ENCODE measurements at regions of chr10 and their contacts with region 1.

Region 1: DNA sequence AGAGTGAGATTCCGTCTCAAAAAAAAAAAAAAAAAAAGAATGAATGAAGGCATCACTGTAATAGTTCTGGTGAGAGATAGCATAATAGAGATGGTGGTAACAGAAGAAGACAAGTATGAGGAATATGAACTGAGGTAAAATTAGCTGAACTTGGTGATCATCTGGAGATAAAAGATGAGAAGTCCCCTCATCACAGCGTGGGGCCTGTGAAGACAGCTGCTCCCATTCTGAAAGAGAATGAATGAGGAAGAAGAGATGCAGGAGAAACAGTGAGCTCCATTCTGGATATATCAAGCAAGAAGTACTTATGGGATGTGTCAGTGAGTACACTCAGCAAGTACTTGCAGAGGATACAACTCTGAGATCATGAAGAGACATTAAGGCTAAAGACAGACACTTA is 28.7 kb downstream of the ARMH3 start:
- DNase-seq: no peak
- ATAC-seq: no peak
- H3K4me3 ChIP-seq: no peak overlapping the region
- H3K27ac ChIP-seq: no peak overlapping the region
- H3K4me1 ChIP-seq: no peaks in the 10 kb centered on the region
- H3K27me3 ChIP-seq: no peaks in the 10 kb centered on the region
- CTCF ChIP-seq: no peak
- POLR2A ChIP-seq: no peak
- RAD21 ChIP-seq: no peak

Region 2: GRCh38 chr10:101897633-101898032 is 129.6 kb before region 1 on chr10:
- CTCF ChIA-PET with region 1: no interaction called
- POLR2A ChIA-PET with region 1: no interaction called
- dilution Hi-C with region 1: no loop called
- in situ Hi-C with region 1: no loop called
- intact Hi-C with region 1: no loop called
- DNase-seq: peak; percentile 75
- ATAC-seq: peak; percentile 96
- H3K4me3 ChIP-seq: no peak overlapping the region
- H3K27ac ChIP-seq: no peak overlapping the region
- H3K4me1 ChIP-seq: peaks cover 9% of the 10 kb centered on the region
- H3K27me3 ChIP-seq: no peaks in the 10 kb centered on the region
- CTCF ChIP-seq: no peak
- POLR2A ChIP-seq: no peak
- RAD21 ChIP-seq: no peak

Region 3: DNA sequence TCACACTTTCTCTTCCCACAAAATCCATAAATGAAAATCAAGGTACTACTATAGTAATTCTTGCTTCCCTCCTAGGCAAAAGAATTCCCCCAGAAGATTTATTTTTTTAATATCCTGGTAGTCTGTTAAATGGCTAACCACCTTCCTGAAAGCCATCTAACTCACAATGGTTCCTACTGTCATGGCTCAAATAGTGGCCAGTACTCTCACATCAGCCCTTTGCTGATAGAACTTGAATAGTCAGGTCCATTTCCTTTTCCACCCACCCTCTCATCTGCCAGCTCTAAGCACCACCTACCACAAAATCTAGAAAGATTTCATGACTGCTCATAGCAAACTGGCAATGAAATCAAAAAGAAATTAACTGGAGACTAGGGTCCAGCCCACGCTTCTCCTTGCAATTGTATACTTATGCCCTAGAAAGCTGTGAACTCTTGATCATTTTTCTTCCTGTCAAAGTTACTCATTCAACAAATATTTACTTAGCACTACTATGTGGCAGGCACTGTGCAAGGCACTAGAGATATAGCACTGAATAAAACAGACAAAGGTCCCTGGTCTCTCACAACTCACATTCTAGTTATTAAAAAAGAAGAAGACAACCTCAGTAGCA is 31.7 kb before region 1 on chr10:
- CTCF ChIA-PET with region 1: no interaction called
- POLR2A ChIA-PET with region 1: no interaction called
- dilution Hi-C with region 1: no loop called
- in situ Hi-C with region 1: no loop called
- intact Hi-C with region 1: no loop called
- DNase-seq: peak; percentile 59
- ATAC-seq: peak; percentile 73
- H3K4me3 ChIP-seq: no peak overlapping the region
- H3K27ac ChIP-seq: no peak overlapping the region
- H3K4me1 ChIP-seq: 0 out of 2 replicates have a peak, but pooled peaks cover 2% of the 10 kb centered on the region
- H3K27me3 ChIP-seq: no peaks in the 10 kb centered on the region
- CTCF ChIP-seq: no peak
- POLR2A ChIP-seq: no peak
- RAD21 ChIP-seq: no peak

Region 4: GRCh38 chr10:102040305-102041050 is 13.2 kb after region 1 on chr10:
- CTCF ChIA-PET with region 1: no interaction called
- POLR2A ChIA-PET with region 1: no interaction called
- dilution Hi-C with region 1: no loop called
- in situ Hi-C with region 1: no loop called
- intact Hi-C with region 1: loop called (anchors 1 kb)
- DNase-seq: peak; percentile 25
- ATAC-seq: no peak
- H3K4me3 ChIP-seq: no peak overlapping the region
- H3K27ac ChIP-seq: no peak overlapping the region
- H3K4me1 ChIP-seq: peaks cover 2% of the 10 kb centered on the region; the same call in 1 of the 2 replicates
- H3K27me3 ChIP-seq: no peaks in the 10 kb centered on the region
- CTCF ChIP-seq: no peak
- POLR2A ChIP-seq: no peak
- RAD21 ChIP-seq: no peak

Region 5: DNA sequence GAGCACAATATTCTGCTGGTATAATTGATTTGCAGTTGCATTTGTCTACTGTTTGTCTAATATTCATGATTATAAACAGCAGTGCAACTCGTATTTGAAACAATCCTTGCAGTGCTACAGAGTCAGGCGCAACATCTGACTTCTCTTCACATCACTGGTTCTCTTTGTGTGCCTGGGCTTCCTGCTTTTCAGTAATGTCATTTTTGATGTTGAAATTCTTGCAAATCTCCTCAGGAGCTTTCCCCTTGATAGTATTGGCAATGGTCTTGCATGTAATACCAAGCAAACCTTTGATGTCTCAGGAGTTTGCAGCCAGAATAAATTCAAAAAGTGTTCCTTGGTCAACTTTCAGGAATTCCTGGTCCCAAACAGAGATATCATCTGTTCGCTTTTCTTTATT is 58.1 kb after region 1 on chr10:
- CTCF ChIA-PET with region 1: no interaction called
- POLR2A ChIA-PET with region 1: no interaction called
- dilution Hi-C with region 1: no loop called
- in situ Hi-C with region 1: no loop called
- intact Hi-C with region 1: no loop called
- DNase-seq: no peak
- ATAC-seq: no peak
- H3K4me3 ChIP-seq: no peak overlapping the region
- H3K27ac ChIP-seq: no peak overlapping the region
- H3K4me1 ChIP-seq: no peaks in the 10 kb centered on the region
- H3K27me3 ChIP-seq: no peaks in the 10 kb centered on the region
- CTCF ChIP-seq: no peak
- POLR2A ChIP-seq: no peak
- RAD21 ChIP-seq: no peak

Measured in IMR-90 (cell line).